ENCODE measurements at regions of chr9 and their contacts with region 1.

Region 1: GRCh38 chr9:81689343-81690190 is at the start of gene TLE1:
- DNase-seq: peak; percentile 98 to 100
- H3K4me3 ChIP-seq: peak within 1 kb of the TSS; percentile 84
- H3K27ac ChIP-seq: peak within 1 kb of the TSS; percentile 91
- H3K4me1 ChIP-seq: peaks cover 34% of the 10 kb centered on the region
- H3K27me3 ChIP-seq: no peaks in the 10 kb centered on the region
- CTCF ChIP-seq: no peak
- total RNA-seq, gene TLE1: 69.9 and 80.9 TPM in 2 replicates

Region 2: DNA sequence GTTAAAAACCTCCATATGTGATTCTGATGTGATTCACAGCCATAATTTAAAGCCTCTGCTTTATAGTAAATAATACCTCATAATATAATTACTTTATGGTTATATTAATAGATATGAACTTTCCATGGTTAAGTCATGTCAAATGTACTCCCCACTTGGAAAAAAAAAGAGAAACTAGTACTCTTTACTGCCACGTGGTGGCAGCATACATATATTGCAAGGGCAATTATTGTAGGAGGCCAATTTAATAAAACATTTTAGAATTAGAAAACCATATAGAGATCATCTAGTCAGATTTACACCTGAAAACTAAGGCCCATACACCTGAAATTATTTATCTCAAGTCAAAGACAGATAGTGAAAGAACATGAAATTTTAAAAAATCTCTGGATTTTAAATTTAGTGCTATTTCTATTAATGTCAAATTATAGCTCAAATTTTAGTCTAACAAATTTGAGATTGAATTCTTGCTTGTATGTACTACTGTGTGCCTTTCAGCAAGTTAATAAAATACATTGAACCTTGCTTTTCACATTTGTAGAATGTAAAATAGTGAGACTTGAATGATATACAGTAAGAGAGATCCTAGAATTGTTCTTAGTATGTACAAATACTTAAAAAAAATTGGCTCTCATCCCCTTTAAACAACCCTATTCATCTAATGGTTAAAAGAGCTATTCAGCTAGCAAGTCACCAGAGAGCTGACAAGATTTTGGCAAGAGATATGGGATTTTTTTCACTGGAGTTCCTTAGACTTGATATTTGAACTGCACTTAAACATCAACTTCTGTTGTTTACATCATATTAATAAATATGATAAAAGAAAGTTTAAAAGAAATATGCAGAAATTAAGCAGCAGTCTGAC is 1514.0 kb before region 1 on chr9:
- CTCF ChIA-PET with region 1: no interaction called
- POLR2A ChIA-PET with region 1: no interaction called
- intact Hi-C with region 1: loop called (anchors 10 kb)
- DNase-seq: no peak
- H3K4me3 ChIP-seq: no peak overlapping the region
- H3K27ac ChIP-seq: no peak overlapping the region
- H3K4me1 ChIP-seq: no peaks in the 10 kb centered on the region
- H3K27me3 ChIP-seq: no peaks in the 10 kb centered on the region
- CTCF ChIP-seq: peak; percentile 84

Region 3: DNA sequence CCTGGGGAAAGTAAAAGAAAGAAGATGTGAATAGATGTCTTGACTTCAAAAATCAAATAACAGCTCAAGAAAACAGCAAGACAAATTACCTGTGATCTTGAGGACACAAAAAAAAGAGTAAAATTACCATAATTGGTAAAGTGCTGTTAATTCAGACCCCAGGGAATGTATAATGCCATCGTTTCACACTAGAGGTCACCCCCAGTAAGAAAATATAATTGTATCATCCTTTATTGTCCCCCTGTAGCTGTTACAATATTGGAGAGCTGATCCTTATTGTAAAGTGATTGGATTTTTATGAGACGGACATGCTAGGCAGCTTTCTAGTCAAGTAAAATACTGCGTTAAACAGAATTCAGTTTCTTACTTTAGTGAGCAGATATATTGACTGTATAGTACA is 377.2 kb before region 1 on chr9:
- CTCF ChIA-PET with region 1: no interaction called
- POLR2A ChIA-PET with region 1: no interaction called
- intact Hi-C with region 1: loop called (anchors 5 kb)
- DNase-seq: no peak
- H3K4me3 ChIP-seq: no peak overlapping the region
- H3K27ac ChIP-seq: no peak overlapping the region
- H3K4me1 ChIP-seq: peaks cover 16% of the 10 kb centered on the region
- H3K27me3 ChIP-seq: no peaks in the 10 kb centered on the region
- CTCF ChIP-seq: no peak

Region 4: DNA sequence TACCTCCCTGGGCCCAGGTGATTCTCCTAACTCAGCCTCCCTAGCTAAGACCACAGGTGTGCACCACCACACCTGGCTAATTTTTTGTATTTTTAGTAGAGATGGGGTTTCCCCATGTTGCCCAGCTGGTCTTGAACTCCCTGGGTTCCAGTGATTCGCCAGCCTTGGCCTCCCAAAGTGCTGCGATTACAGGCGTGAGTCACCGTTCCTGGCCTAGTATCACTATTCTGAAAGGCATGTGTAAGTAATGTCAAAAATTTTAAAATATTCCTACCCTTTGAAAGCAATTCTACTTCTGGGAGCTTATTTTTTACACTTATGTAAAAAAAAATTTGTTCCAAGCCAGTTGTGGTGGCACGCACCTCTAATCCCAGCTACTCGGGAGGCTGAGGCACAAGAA is 26.8 kb after region 1 on chr9:
- CTCF ChIA-PET with region 1: interaction called, 3 read pairs
- POLR2A ChIA-PET with region 1: interaction called, 10 read pairs
- intact Hi-C with region 1: no loop called
- DNase-seq: peak in 1 of 2 experiments; percentile 52
- H3K4me3 ChIP-seq: no peak overlapping the region
- H3K27ac ChIP-seq: no peak overlapping the region
- H3K4me1 ChIP-seq: peaks cover 48% of the 10 kb centered on the region
- H3K27me3 ChIP-seq: no peaks in the 10 kb centered on the region
- CTCF ChIP-seq: no peak

Region 5: DNA sequence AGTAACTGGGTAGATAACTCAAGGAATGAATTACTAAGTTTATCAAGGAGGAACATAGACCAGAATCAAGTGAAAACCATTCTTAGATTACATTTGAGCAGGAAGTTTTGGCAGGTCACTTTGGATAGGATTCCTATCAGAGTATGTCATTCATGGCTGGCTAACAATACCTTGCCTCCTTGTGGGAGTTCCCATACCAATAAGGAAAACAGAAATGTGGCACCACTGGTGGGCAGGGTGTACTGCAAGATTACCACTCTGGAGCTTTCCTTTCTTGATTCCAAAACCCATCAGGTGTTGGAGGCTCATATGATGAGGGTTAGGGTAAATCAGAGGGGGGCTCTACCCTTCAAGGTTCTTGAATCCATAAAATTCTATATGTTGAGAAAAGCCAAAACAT is 280.4 kb after region 1 on chr9:
- CTCF ChIA-PET with region 1: no interaction called
- POLR2A ChIA-PET with region 1: no interaction called
- intact Hi-C with region 1: loop called (anchors 5 kb)
- DNase-seq: peak in 1 of 2 experiments; percentile 5
- H3K4me3 ChIP-seq: no peak overlapping the region
- H3K27ac ChIP-seq: no peak overlapping the region
- H3K4me1 ChIP-seq: no peaks in the 10 kb centered on the region
- H3K27me3 ChIP-seq: no peaks in the 10 kb centered on the region
- CTCF ChIP-seq: no peak

Region 6: DNA sequence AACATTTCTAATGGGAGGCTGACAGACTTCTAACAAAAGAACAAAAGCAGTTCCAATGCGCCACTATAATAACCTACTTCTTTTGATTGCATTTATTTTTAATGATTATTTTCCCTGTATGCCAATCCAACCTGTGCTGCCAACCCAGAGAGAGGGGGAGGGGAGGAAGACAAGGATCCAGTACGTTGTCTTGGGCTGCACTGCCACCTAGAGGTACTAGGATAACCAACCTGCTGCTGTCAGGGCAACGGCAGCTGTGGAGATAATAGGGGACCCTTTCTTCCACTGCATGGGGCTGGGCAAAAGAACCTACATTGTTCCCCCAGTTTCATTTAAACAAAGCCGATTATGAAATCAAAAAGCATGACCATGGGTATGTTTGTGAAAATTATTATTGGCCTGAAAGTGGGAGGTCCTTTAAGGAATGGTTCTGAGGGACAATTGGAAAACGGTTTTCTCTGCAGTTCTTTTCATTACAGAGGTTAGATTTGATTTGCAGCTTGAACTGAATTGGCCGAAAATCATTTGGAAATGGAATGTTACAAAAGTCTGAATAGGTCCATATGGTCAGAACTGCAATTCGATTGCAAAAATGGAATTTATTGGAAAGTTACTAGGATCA is 1272.0 kb after region 1 on chr9:
- CTCF ChIA-PET with region 1: no interaction called
- POLR2A ChIA-PET with region 1: no interaction called
- intact Hi-C with region 1: loop called (anchors 2 kb)
- DNase-seq: peak; percentile 64 to 79
- H3K4me3 ChIP-seq: no peak overlapping the region
- H3K27ac ChIP-seq: no peak overlapping the region
- H3K4me1 ChIP-seq: no peaks in the 10 kb centered on the region
- H3K27me3 ChIP-seq: no peaks in the 10 kb centered on the region
- CTCF ChIP-seq: peak; percentile 92